Activated CD4-positive, alpha-beta memory T cell treated with anti-CD3 and anti-CD28 coated beads for 36 hours (primary cell): ENCODE measurements at regions of chr16 and their contacts with region 1.

Region 1: GRCh38 chr16:67017810-67018488 is 11.0 kb upstream of the CBFB start:
- DNase-seq: peak; percentile 95
- H3K4me3 Mint-ChIP-seq: no peak overlapping the region
- H3K27ac Mint-ChIP-seq: no peak overlapping the region
- H3K4me1 Mint-ChIP-seq: peaks cover 19% of the 10 kb centered on the region
- H3K27me3 Mint-ChIP-seq: no peaks in the 10 kb centered on the region

Region 2: DNA sequence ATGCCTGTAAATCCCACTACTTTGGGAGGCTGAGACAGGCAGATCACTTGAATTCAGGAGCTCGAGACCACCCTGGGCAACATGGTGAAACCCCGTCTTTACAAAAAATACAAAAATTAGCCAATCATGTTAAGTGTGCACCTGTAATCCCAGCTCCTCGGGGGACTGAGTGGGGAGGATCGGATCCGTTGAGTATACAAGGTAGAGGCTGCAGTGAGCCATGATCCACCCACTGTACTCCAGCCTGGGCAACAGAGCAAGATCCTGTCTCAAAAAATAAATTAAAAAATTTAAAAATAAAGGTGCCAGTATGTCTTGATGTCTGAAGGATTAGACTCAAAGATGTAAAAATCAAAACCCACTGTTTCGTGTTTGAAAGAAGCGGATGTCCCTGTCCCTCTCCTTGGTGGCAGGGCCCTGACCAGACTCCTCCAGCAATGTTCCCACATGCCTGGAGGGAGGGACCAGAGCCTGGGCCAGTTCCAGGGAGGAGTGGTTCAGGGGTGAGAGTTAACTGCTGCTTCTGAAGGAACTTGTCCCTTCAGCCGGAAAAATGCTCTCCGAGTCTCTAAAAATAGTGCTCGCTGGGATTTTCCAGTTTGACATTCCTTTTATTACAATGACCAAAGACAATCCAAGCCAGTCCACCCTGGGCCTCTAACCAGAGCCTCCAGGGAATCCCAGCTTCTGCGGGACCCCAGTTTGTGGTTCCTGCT is 312.0 kb before region 1 on chr16:
- CTCF ChIA-PET with region 1: no interaction called
- POLR2A ChIA-PET with region 1: no interaction called
- intact Hi-C with region 1: no loop called
- DNase-seq: no peak
- H3K4me3 Mint-ChIP-seq: no peak overlapping the region
- H3K27ac Mint-ChIP-seq: no peak overlapping the region
- H3K4me1 Mint-ChIP-seq: no peaks in the 10 kb centered on the region
- H3K27me3 Mint-ChIP-seq: no peaks in the 10 kb centered on the region

Region 3: GRCh38 chr16:66924527-66925321 is 93.2 kb before region 1 on chr16:
- CTCF ChIA-PET with region 1: no interaction called
- POLR2A ChIA-PET with region 1: no interaction called
- intact Hi-C with region 1: no loop called
- DNase-seq: peak; percentile 65
- H3K4me3 Mint-ChIP-seq: peak overlapping the region; percentile 20
- H3K27ac Mint-ChIP-seq: no peak overlapping the region
- H3K4me1 Mint-ChIP-seq: peaks cover 11% of the 10 kb centered on the region
- H3K27me3 Mint-ChIP-seq: peaks cover 30% of the 10 kb centered on the region

Region 4: GRCh38 chr16:66954097-66954659 is 63.8 kb before region 1 on chr16:
- CTCF ChIA-PET with region 1: interaction called, 13 read pairs
- POLR2A ChIA-PET with region 1: no interaction called
- intact Hi-C with region 1: loop called (anchors 1 kb)
- DNase-seq: peak; percentile 88
- H3K4me3 Mint-ChIP-seq: no peak overlapping the region
- H3K27ac Mint-ChIP-seq: peak overlapping the region; percentile 9
- H3K4me1 Mint-ChIP-seq: peaks cover 15% of the 10 kb centered on the region
- H3K27me3 Mint-ChIP-seq: peaks cover 31% of the 10 kb centered on the region

Region 5: DNA sequence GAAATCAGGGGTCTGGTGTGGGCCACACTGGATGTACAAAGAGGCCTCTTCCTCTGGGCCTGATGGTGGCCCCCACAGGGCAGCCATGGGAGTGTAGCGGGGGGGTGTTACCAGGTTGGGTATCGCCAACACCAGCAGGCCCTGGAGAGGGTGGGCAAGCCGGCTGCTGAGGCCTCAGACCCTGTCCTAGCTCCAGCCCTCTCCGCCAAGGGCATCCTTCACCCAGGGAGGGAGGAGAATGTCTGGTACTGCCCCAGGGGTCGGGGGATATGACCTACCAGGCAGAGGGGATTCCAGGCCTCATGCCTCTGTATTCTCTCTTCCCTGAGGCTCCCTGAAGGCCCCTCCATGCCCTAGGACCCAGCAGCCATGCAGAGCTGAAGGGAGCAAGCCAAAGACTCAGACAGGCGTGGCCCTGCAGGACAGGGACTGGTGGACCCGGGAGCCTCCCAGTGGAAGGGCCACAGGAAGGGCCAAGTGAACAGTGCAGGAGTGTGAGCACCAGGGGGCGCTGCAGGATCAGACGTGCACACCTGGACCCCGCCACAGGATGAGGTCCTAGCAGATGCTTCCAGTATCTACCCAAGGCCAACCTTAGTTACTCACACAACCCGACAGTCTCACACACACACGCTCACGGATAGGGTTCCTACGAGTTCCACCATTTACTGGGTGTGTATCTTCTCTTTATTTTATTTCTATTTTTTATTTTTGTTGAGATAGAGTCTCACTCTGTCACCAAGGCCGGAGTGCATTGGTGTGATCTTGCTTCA is 40.4 kb before region 1 on chr16:
- CTCF ChIA-PET with region 1: interaction called, 25 read pairs
- POLR2A ChIA-PET with region 1: interaction called, 24 read pairs
- intact Hi-C with region 1: loop called (anchors 1 kb)
- DNase-seq: peak; percentile 95
- H3K4me3 Mint-ChIP-seq: no peak overlapping the region
- H3K27ac Mint-ChIP-seq: peak overlapping the region; percentile 54
- H3K4me1 Mint-ChIP-seq: peaks cover 50% of the 10 kb centered on the region
- H3K27me3 Mint-ChIP-seq: no peaks in the 10 kb centered on the region

Region 6: GRCh38 chr16:66991545-66992077 is 26.3 kb before region 1 on chr16:
- CTCF ChIA-PET with region 1: interaction called, 24 read pairs
- POLR2A ChIA-PET with region 1: interaction called, 18 read pairs
- intact Hi-C with region 1: no loop called
- DNase-seq: no peak
- H3K4me3 Mint-ChIP-seq: no peak overlapping the region
- H3K27ac Mint-ChIP-seq: no peak overlapping the region
- H3K4me1 Mint-ChIP-seq: peaks cover 14% of the 10 kb centered on the region
- H3K27me3 Mint-ChIP-seq: no peaks in the 10 kb centered on the region

Region 7: DNA sequence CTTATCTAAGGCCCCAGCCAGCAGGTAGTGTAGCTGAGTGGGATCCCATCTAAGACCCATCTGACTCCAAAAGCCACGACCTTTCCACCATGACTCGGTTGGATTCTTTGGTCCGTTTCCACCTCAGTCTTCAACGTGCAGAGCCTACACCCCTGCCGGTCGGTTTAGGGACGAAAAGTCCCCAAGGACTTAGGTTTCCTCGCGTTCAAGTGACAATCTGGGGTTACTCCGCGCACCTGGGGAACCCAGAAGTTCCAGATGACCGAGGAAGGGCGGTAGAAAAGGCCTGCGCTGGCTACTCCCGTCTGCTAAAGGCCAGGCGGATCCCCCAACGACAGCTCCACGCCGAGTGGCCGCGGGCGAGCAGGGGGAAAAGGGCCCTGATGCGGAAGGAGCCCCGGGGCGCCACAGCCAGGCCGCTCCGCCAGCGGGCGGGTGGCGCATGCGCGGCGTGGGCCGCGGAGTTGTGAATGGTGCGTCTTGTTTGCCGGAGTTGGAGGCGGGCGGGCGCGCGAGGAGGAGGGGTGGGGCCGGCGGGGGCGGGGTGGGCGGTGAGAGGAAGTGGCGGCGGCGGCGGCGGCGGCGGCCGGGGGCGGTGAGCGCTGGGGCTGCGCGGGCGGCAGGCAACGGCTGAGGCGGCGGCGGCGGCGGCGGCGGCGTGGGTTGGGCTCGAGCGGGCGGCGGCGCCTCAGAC is 10.8 kb after region 1 on chr16 and contains the start of gene CBFB:
- CTCF ChIA-PET with region 1: interaction called, 56 read pairs
- POLR2A ChIA-PET with region 1: interaction called, 21 read pairs
- intact Hi-C with region 1: no loop called
- DNase-seq: peak; percentile 94
- H3K4me3 Mint-ChIP-seq: peak within 1 kb of the TSS; percentile 89
- H3K27ac Mint-ChIP-seq: peak within 1 kb of the TSS; percentile 93
- H3K4me1 Mint-ChIP-seq: peaks cover 39% of the 10 kb centered on the region
- H3K27me3 Mint-ChIP-seq: no peaks in the 10 kb centered on the region
- total RNA-seq, gene CBFB: 155 to 163 TPM

Region 8: DNA sequence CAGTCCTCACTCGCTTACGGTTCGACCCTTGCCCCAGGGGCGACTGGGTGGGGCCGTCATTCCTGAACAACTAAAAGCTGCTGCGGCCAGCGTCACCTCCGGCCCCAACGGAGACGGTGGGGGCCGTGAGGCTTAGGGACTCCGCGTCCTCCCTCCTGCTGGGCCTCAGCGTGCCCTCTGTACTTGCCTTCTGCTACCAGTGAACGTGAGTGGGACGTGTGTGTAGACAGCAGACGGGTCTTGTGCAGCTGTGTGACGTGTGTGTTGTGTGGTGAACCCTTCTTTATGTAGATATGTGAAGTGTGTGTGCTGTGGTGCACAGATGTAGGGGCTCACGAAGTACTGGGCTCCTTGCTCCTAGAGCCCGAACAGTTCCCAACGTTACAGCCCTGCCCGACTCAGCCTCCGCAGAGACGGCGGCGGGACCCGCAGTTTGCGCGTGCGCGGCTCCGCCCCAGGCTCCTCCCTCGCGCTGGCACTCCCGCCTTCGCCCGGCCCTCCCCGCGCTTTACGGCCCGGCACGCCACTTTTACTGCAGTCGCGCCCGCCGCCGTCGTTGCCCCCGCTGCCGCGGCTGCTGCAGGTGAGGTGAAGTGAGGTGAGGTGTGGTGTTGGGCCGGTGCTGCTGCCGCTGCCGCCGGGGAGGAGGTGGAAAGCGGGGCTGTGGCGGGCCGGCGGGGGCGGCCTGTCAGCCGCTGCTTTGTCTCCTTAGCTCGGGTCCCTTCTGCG is 91.6 kb after region 1 on chr16 and contains the start of gene PHAF1:
- CTCF ChIA-PET with region 1: interaction called, 103 read pairs
- POLR2A ChIA-PET with region 1: no interaction called
- intact Hi-C with region 1: no loop called
- DNase-seq: peak; percentile 97
- H3K4me3 Mint-ChIP-seq: peak within 1 kb of the TSS; percentile 92
- H3K27ac Mint-ChIP-seq: peak within 1 kb of the TSS; percentile 80
- H3K4me1 Mint-ChIP-seq: peaks cover 32% of the 10 kb centered on the region
- H3K27me3 Mint-ChIP-seq: no peaks in the 10 kb centered on the region
- total RNA-seq, gene PHAF1: 11.4 to 12.3 TPM

Region 9: GRCh38 chr16:67183627-67184328 is 165.8 kb after region 1 on chr16 and contains the start of gene MATCAP1:
- CTCF ChIA-PET with region 1: interaction called, 57 read pairs
- POLR2A ChIA-PET with region 1: interaction called, 3 read pairs
- intact Hi-C with region 1: loop called (anchors 1 kb)
- DNase-seq: peak; percentile 96
- H3K4me3 Mint-ChIP-seq: no peak within 1 kb of the TSS
- H3K27ac Mint-ChIP-seq: no peak within 1 kb of the TSS
- H3K4me1 Mint-ChIP-seq: peaks cover 14% of the 10 kb centered on the region
- H3K27me3 Mint-ChIP-seq: peaks cover 8% of the 10 kb centered on the region
- total RNA-seq, gene MATCAP1: 37.3 to 38.3 TPM